ENCODE measurements at regions of chr1 and their contacts with region 1.

Region 1: DNA sequence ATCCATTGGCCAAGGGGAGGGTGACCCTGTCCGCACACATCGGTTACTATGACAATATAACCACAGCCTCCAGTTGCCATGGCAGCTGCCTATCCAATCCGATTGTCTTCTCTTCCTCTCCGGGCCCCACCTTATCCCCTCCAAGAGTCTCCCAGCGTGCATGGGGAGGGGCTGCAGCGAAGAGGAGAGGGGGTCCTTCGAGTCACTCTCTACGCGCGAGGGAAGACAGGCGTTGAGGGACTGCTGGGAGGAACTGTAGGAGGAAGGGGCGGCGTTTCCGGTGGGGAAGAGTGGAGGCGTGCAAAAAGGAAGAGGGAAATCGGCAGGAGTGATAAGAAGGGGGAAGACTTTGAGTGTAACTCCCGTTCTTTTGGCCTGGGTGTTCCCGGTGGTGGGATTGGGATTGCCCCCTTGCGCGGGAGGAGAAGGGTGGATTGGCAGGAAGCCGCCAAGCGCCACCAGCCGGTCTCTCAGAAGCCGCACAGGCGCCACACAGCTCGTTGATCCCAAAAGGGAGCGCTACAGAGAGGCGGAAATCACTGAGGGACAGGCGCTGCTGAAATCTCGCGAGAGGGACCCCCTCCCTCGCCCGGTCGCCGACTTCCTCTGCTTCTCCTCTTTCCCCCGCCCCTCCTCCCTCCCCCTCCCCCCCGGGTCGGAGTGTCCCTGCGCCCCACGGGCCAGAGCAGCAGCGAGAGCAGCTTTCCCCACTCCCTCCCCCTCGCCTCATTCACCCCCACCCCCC is 384 bp upstream of the SMG7 start:
- DNase-seq: peak; percentile 94 to 99 (median 97)

Region 2: DNA sequence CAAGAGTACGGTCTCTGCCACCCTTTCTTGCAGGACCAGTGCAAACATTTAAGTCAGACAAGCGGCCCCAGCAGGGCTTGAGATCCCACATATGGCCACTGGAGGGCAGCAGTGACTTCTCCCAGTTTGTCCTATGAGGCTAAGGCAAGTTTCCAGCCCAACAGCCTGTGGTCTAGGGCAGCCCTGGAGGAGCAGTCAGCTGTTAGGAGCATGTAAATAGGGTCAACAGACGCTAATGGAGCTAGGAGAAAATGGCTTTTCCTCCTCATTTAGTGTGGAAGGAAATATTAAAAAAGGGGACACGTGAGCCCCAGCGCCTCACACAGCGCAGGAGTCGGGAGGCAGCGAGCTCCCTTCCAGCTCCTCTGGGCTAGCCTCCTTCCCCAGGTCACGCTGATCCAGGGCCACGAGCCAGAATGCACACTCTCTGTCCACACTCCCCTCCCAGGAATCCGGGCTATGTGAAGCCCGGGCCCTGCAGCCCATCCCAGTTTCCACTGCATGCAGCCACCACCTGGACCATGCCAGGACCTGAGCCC is 190.3 kb before region 1 on chr1:
- intact Hi-C with region 1: loop called (anchors 5 kb)
- DNase-seq: peak; percentile 69 to 98 (median 90)

Region 3: GRCh38 chr1:183543619-183544204 is 71.8 kb after region 1 on chr1:
- intact Hi-C with region 1: loop called (anchors 2 kb)
- DNase-seq: no peak

Region 4: DNA sequence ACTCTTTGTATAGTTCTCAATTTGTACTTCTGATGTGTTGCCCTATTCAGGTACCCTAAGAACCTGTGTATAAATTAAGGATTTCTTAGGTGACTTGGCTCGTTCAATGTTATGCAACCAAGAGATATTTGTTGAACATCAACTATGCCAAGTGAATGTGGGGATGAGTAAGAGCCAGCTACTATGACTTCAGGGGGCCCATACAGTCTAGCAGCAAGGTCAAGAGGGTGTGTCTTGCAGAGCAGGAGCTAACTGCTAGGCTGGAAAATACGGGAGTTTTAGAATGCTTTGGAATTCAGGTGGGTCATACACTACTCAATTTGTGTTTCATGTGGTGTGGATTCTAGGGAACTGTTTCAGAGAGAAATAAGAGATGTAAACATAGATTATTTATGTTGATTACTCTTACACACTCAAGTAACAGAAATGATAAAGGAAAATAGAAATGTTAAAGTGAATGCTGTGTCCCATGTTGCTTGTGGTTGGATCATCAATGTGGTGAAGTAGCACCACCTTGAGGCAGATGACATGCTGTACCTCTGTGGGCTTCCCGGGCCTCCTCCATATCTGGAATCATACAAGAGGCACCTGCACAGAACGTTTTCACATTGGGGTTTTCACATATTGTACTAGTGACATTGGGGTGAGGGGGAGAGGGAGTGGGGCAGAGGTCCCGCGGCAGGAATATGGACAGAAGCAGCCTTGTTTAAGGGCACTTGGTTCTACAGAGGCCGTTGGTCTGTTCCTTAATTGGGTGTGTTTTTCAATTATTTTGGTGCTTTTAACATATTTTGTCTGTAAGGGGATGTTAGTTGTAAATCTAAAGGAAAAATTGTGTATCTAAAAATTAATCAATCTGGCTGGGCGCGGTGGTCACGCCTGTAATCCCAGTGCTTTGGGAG is 151.2 kb after region 1 on chr1:
- intact Hi-C with region 1: loop called (anchors 2 kb)
- DNase-seq: peak in 7 of 10 donors; percentile 37 to 88 (median 59)

Region 5: GRCh38 chr1:183635606-183636333 is 163.9 kb after region 1 on chr1 and contains the start of gene ARPC5:
- intact Hi-C with region 1: loop called (anchors 5 kb)
- DNase-seq: peak; percentile 96 to 100 (median 98)

Region 6: GRCh38 chr1:183915625-183916510 is 444.0 kb after region 1 on chr1:
- intact Hi-C with region 1: loop called (anchors 5 kb)
- DNase-seq: peak in 8 of 10 donors; percentile 35 to 92 (median 75)